Head of caudate nucleus (tissue), 42 donors: ENCODE measurements at regions of chr19 and their contacts with region 1.

Region 1: GRCh38 chr19:39480337-39481228 is at the start of gene TIMM50:
- DNase-seq: peak; percentile 92 to 99 (median 97)

Region 2: DNA sequence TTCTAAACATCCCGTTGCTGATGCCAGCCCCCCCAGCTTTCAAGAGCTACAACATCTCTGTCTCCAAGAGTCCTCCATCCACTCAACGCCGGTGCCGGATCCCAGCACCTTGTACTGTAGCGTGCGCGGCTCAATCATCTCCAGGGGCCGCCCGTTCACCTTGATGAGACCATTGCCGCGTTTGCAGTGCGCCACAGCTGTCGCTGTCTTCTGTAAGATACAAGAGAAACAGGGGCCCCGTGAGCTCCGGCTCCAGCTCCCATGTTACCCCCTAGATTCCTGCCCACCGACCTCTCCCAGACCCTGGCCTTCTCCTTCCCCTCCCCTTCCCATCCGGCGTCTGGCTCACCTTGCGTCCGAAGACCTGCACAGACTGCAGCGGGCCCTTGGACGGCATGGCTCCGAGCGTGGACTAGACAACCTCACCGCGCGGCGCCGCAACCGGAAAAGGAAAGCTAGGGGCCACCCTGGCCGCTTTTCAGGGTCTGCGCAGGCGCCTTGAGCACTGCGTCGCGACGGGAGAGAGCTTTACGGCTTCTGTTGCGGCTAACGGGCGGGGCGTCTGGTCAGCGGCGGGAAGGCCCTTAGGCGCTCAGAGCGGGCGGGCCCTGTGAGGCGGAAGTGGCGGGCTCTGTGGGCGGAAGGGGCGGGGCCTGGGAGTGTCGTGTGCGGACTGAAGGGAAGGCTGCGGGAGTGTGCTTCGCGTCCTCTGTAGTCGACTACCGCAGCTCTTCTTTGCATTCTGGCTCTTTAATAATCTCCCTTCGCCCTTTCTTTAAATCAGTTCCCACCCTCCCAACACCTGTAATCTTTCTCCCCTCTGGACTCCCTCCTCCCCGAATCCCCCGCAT is 44.9 kb before region 1 on chr19 and contains the start of gene RPS16:
- intact Hi-C with region 1: loop called (anchors 2 kb)
- DNase-seq: peak; percentile 95 to 100 (median 99)

Region 3: DNA sequence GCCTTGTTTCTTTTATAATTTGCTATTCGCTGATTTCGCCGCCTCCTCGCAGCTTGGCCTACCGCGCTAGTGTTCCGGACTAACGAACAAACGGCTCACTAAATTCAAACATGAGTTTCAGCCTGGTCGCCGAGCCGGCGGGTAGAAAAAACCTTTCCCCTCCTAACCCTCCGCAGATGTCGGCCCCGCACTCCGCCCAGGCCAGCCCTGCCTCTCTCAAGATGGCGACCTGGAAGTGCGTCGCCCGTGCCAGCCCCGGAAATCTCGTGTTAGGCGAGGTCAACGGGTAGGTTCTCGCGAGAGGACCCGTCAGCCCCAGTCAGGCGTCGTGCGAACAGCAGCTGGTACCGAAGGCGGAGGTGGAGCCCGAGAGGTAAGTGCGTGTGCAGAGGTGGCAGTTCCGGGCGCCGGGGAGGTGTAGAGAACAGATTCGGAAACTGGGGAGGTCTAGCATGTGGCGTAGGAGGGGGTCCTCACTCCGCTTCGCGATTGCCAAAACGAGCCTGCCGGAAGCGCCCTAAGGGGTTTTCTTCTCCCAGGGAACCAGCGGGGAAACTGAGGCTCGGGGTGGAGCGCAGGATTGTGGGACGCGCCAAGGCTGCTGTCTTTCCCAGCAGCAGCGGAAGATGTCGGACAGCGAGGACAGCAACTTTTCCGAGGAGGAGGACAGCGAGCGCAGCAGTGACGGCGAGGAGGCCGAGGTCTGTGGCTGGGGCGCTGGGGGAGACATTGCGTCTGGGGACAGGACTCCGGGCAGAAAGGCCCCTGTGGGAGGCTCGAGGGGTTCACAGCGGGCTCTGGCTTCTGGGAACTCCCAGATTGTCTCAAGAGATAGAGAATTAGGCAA is 35.1 kb before region 1 on chr19 and contains the start of gene SUPT5H:
- intact Hi-C with region 1: loop called (anchors 5 kb)
- DNase-seq: peak; percentile 90 to 98 (median 96)

Region 4: DNA sequence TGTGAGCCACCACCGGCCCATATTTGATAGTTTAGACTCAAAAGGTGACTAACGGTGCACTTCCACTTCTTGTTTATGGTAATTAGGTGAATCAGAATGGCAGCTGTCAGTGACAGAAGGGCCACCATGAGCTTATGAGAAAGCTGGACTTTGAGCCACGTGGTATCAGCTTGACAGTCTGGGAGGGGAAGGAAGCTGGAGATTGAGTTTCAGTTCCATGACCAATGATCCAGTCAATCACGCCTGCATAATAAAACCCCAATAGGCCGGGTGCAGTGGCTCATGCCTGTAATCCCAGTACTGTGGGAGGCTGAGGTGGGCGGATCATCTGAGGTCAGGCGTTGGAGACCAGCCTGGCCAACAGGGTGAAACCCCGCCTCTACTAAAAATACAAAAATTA is 43.9 kb after region 1 on chr19:
- intact Hi-C with region 1: no loop called
- DNase-seq: no peak

Region 5: DNA sequence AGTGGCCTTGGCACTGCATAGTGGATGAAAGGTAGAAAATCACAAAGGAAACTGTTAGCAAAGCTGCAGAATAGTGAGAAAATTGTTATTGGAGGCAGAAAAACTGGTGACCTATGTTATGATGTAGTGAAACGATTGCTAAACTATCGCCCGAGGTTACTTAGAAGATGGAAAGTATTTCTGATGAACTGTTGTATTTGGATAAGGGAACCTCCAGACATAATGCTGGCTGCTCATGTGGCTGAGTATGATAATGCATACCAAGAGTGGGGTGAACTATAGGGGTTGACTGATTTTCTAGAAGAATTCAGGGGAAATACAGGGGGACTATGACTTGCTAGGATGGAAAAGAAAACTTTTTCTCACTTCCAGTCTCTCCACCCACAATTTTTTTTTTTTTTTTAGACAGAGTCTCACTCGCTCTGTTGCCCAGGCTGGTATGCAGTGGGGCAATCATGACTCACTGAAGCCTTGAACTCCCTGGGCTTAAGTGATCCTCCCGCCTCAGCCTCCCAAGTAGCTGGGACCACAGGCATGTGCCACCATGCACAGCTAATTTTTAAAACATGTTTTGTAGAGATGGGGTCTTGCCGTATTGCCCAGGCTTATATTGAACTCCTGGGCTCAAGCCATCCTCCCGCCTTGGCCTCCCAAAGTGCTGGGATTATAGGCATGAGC is 63.8 kb after region 1 on chr19:
- intact Hi-C with region 1: no loop called
- DNase-seq: no peak